H1 (cell line): ENCODE measurements at regions of chr9 and their contacts with region 1.

Region 1: DNA sequence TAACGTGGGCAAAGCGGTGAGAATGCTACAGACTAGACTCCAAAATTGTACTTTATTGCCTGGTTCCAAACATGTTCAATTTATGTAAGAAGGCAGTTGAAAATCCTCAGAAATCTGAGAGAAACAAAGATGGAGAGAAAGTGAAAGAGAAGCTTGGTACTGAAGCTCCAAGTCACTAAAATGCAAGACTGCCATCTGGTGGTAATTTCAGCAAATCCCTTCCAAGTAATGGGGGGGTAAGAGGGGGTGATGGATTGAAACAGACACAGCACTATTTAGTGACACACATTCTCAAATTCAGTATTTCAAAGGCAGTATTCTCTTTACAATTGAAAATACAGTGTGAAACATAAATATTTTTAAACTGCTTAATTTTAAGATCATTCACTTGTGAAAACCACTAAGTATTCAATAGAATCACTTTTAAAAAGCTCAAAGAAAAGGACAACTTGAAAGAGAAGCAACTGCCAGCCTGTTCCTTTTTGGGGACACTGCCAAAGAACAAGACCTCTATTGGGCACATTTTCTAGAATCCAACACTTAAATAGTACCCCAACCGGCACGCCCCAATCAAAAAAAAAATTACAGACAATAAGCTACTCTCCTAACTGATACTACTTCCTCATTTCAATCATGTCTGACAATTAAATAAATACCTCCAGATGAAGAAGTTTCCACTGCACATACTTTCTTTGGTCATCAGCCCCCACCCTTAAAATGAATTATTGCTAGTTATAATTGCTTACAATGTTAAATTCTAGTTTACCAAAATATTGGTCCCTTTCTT is 131.5 kb downstream of the AGTPBP1 start:
- DNase-seq: no peak
- H3K4me3 ChIP-seq: no peak overlapping the region
- H3K27ac ChIP-seq: no peak overlapping the region
- H3K4me1 ChIP-seq: no peaks in the 10 kb centered on the region
- H3K27me3 ChIP-seq: no peaks in the 10 kb centered on the region
- CTCF ChIP-seq: peak in 2 of 3 experiments; percentile 64 to 84; a peak in 3 of 4 replicates
- EP300 ChIP-seq: no peak
- POLR2A ChIP-seq: no peak
- RAD21 ChIP-seq: peak; percentile 85 to 87

Region 2: GRCh38 chr9:85483208-85483607 is 127.1 kb before region 1 on chr9:
- CTCF ChIA-PET with region 1: no interaction called
- POLR2A ChIA-PET with region 1: no interaction called
- DNase-seq: no peak
- H3K4me3 ChIP-seq: no peak overlapping the region
- H3K27ac ChIP-seq: no peak overlapping the region
- H3K4me1 ChIP-seq: no peaks in the 10 kb centered on the region; a peak in 1 of 7 replicates
- H3K27me3 ChIP-seq: no peaks in the 10 kb centered on the region; a peak in 1 of 7 replicates
- CTCF ChIP-seq: 0 out of 4 replicates have a peak, but pooled peaks of 1 of the 3 experiments have one; percentile 17
- EP300 ChIP-seq: no peak
- POLR2A ChIP-seq: no peak
- RAD21 ChIP-seq: peak; percentile 35 to 37; a peak in 3 of 4 replicates

Region 3: DNA sequence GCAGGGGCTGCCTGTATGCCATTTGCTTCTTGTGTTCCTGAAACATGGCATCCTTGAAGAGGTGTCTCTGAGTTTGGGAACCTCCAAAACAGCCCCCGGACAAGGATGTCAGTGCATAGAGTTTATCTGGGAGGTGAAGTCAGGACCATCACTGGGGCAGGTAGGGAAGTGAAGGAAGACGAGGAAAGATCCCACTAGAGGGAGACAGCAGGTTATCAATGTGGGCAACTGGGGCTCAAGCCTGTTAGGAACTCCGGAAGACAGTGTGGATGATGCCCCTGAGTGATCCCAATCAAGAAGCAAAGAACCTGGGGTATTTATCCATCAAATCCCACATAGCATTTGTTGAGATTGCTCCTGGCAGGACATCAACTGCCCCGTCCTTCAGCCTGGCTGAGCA is 101.7 kb before region 1 on chr9:
- CTCF ChIA-PET with region 1: interaction called, 53 read pairs
- POLR2A ChIA-PET with region 1: no interaction called
- DNase-seq: no peak
- H3K4me3 ChIP-seq: no peak overlapping the region
- H3K27ac ChIP-seq: no peak overlapping the region
- H3K4me1 ChIP-seq: no peaks in the 10 kb centered on the region
- H3K27me3 ChIP-seq: no peaks in the 10 kb centered on the region
- CTCF ChIP-seq: peak; percentile 47 to 67 (median 60)
- EP300 ChIP-seq: no peak
- POLR2A ChIP-seq: no peak
- RAD21 ChIP-seq: peak; percentile 70 to 82

Region 4: GRCh38 chr9:85586684-85587083 is 23.6 kb before region 1 on chr9:
- CTCF ChIA-PET with region 1: interaction called, 10 read pairs
- POLR2A ChIA-PET with region 1: no interaction called
- DNase-seq: no peak
- H3K4me3 ChIP-seq: no peak overlapping the region
- H3K27ac ChIP-seq: no peak overlapping the region
- H3K4me1 ChIP-seq: no peaks in the 10 kb centered on the region
- H3K27me3 ChIP-seq: no peaks in the 10 kb centered on the region
- CTCF ChIP-seq: no peak
- EP300 ChIP-seq: no peak
- POLR2A ChIP-seq: no peak
- RAD21 ChIP-seq: no peak

Region 5: GRCh38 chr9:85676790-85677189 is 66.5 kb after region 1 on chr9:
- CTCF ChIA-PET with region 1: no interaction called
- POLR2A ChIA-PET with region 1: no interaction called
- DNase-seq: no peak
- H3K4me3 ChIP-seq: no peak overlapping the region
- H3K27ac ChIP-seq: no peak overlapping the region
- H3K4me1 ChIP-seq: no peaks in the 10 kb centered on the region
- H3K27me3 ChIP-seq: no peaks in the 10 kb centered on the region
- CTCF ChIP-seq: no peak
- EP300 ChIP-seq: no peak
- POLR2A ChIP-seq: no peak
- RAD21 ChIP-seq: no peak